ENCODE measurements at regions of chr3 and their contacts with region 1.

Region 1: DNA sequence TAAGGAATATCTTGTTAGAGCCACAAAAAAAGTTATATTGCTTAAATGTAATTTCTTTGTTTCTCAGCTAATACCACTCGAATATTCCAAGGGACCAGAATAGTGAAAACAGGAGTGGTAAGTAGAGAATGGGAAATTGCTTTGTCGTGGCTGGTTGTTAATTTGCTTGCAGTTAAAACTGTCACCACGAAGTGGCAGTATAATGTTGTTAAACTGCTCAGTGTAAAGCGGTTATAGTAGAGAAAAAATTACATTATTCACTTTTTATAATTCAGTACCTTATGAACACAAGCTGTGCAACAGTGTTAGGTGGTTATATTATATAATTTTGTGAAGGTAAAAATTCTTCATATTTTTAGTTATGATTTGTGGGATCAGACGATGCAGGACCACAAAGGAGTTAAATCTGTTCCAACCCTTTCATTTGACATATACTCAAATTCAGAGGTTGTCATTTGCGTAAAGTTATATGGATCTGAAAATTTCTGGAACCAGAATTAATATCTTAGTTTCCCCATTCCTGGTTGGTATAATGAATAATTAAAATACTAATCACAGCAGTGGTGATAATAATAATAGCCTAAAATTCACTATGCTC is 171.8 kb downstream of the FEZF2 start:
- DNase-seq: no peak
- ATAC-seq: peak in 1 of 2 donors; percentile 52
- H3K4me3 ChIP-seq: no peak overlapping the region
- H3K27ac ChIP-seq: no peak overlapping the region
- H3K4me1 ChIP-seq: no peaks in the 10 kb centered on the region
- H3K27me3 ChIP-seq: no peaks in the 10 kb centered on the region
- CTCF ChIP-seq: peak; percentile 51

Region 2: GRCh38 chr3:62109534-62109933 is 92.0 kb before region 1 on chr3:
- intact Hi-C with region 1: no loop called
- DNase-seq: no peak
- ATAC-seq: peak in 1 of 2 donors; percentile 37
- H3K4me3 ChIP-seq: no peak overlapping the region
- H3K27ac ChIP-seq: no peak overlapping the region
- H3K4me1 ChIP-seq: no peaks in the 10 kb centered on the region
- H3K27me3 ChIP-seq: no peaks in the 10 kb centered on the region
- CTCF ChIP-seq: no peak

Region 3: GRCh38 chr3:62558549-62559112 is 357.1 kb after region 1 on chr3:
- intact Hi-C with region 1: loop called (anchors 10 kb)
- DNase-seq: no peak
- ATAC-seq: peak in 1 of 2 donors; percentile 53
- H3K4me3 ChIP-seq: no peak overlapping the region
- H3K27ac ChIP-seq: no peak overlapping the region
- H3K4me1 ChIP-seq: no peaks in the 10 kb centered on the region
- H3K27me3 ChIP-seq: no peaks in the 10 kb centered on the region
- CTCF ChIP-seq: peak; percentile 42